ENCODE measurements at regions of chr9 and their contacts with region 1.

Region 1: GRCh38 chr9:21831961-21832509 is 29.6 kb downstream of the MTAP start:
- DNase-seq: peak; percentile 83
- H3K4me3 Mint-ChIP-seq: no peak overlapping the region
- H3K27ac Mint-ChIP-seq: peak overlapping the region; percentile 77
- H3K4me1 Mint-ChIP-seq: peaks cover 65% of the 10 kb centered on the region
- H3K27me3 Mint-ChIP-seq: no peaks in the 10 kb centered on the region

Region 2: GRCh38 chr9:21110708-21111576 is 721.1 kb before region 1 on chr9:
- CTCF ChIA-PET with region 1: no interaction called
- intact Hi-C with region 1: no loop called
- DNase-seq: peak; percentile 20
- H3K4me3 Mint-ChIP-seq: no peak overlapping the region
- H3K27ac Mint-ChIP-seq: no peak overlapping the region
- H3K4me1 Mint-ChIP-seq: no peaks in the 10 kb centered on the region
- H3K27me3 Mint-ChIP-seq: no peaks in the 10 kb centered on the region

Region 3: GRCh38 chr9:21788752-21789151 is 43.3 kb before region 1 on chr9:
- CTCF ChIA-PET with region 1: no interaction called
- intact Hi-C with region 1: no loop called
- DNase-seq: no peak
- H3K4me3 Mint-ChIP-seq: no peak overlapping the region
- H3K27ac Mint-ChIP-seq: no peak overlapping the region
- H3K4me1 Mint-ChIP-seq: no peaks in the 10 kb centered on the region
- H3K27me3 Mint-ChIP-seq: peaks cover 7% of the 10 kb centered on the region

Region 4: GRCh38 chr9:21919377-21920362 is 87.6 kb after region 1 on chr9:
- CTCF ChIA-PET with region 1: no interaction called
- intact Hi-C with region 1: loop called (anchors 1 kb)
- DNase-seq: peak; percentile 49
- H3K4me3 Mint-ChIP-seq: no peak overlapping the region
- H3K27ac Mint-ChIP-seq: peak overlapping the region; percentile 37
- H3K4me1 Mint-ChIP-seq: peaks cover 14% of the 10 kb centered on the region
- H3K27me3 Mint-ChIP-seq: no peaks in the 10 kb centered on the region

Region 5: DNA sequence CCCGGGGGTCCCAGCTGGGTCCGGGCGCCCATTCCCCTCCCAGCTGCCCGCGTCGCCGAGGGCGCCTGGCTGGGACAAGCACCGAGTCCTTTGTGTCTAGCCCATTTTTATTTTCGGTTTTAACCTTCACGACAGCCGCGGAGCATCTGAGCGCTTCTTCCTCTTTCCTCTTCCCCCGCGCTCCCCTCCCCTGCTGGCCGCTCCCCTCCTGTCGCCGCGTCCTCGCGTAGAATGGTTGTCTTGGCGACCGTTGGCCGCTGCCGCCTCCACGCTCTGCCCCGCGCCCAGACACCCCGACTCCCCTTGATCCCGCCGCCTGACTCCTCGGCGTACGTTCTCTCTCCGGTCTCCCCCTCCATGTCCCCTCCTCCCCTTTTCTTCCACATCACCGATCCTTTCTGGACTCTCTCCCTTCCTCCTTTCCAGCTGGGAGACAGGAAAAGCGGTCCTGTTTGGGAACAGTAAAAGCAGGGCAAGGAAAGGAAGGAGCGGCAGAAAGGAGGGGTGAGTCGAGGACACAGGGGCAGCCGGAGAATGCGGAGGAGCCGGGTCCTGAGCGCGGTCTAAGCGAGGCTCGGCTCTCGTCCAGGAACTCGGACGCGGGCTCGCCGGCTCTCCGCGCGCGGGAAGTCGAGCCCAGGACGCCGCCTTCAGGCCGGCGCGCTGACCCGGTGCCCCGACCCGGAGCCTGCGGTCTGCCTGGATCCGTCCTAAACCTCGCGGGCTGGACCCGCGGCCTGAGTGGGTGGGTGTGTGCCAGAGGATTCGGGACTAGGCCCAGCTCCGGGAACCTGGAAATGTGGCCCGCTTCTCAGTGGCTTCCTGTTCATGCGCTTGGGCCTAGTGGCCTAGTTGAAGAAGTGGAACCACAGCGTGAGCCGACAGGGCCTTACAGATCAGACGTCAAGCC is 163.4 kb after region 1 on chr9:
- CTCF ChIA-PET with region 1: no interaction called
- intact Hi-C with region 1: loop called (anchors 1 kb)
- DNase-seq: peak; percentile 77
- H3K4me3 Mint-ChIP-seq: peak overlapping the region; percentile 87
- H3K27ac Mint-ChIP-seq: peak overlapping the region; percentile 36
- H3K4me1 Mint-ChIP-seq: peaks cover 10% of the 10 kb centered on the region
- H3K27me3 Mint-ChIP-seq: peaks cover 42% of the 10 kb centered on the region

Region 6: DNA sequence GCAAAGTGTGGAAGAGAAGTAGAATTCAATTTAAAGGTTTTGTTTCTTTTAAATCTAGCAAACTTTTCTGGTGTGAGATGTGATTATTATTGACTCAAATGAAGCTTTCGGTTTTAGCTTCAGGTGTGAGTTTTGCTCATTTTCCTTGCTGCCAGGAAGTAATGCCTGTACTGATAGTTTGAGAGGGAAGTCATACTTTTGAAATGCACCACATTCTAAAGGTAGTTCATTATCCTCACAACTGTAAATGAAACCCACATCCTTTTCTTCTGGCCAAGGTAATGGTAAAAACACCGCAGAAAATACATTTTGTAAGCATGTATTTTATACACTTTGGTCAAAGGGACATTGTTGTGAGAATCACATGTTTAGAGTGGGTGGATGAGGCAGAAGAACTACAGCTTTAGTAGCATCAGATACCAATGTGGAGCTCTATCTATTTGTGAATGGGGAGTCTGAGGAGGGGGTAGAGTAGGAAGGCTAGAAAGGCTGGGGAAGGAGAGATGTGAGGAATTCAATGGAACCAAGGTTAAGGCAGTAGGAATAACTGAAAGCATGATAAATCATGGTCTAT is 344.0 kb after region 1 on chr9:
- CTCF ChIA-PET with region 1: no interaction called
- intact Hi-C with region 1: loop called (anchors 1 kb)
- DNase-seq: peak; percentile 16
- H3K4me3 Mint-ChIP-seq: no peak overlapping the region
- H3K27ac Mint-ChIP-seq: no peak overlapping the region
- H3K4me1 Mint-ChIP-seq: peaks cover 10% of the 10 kb centered on the region
- H3K27me3 Mint-ChIP-seq: peaks cover 34% of the 10 kb centered on the region